ENCODE measurements at regions of chr6 and their contacts with region 1.

Region 1: GRCh38 chr6:31068669-31069340 is 43.6 kb downstream of the C6orf15 start:
- DNase-seq: peak; percentile 61 to 80
- H3K4me3 ChIP-seq: no peak overlapping the region
- H3K27ac ChIP-seq: no peak overlapping the region
- H3K4me1 ChIP-seq: peaks cover 3% of the 10 kb centered on the region; the same call in 1 of the 2 replicates
- H3K27me3 ChIP-seq: no peaks in the 10 kb centered on the region
- CTCF ChIP-seq: peak; percentile 94

Region 2: GRCh38 chr6:30483677-30484279 is 585.0 kb before region 1 on chr6:
- CTCF ChIA-PET with region 1: interaction called, 3 read pairs
- POLR2A ChIA-PET with region 1: no interaction called
- intact Hi-C with region 1: loop called (anchors 2 kb)
- DNase-seq: peak; percentile 45 to 56
- H3K4me3 ChIP-seq: no peak overlapping the region
- H3K27ac ChIP-seq: no peak overlapping the region
- H3K4me1 ChIP-seq: no peaks in the 10 kb centered on the region; the same call in 1 of the 2 replicates
- H3K27me3 ChIP-seq: peaks cover 30% of the 10 kb centered on the region
- CTCF ChIP-seq: peak; percentile 74

Region 3: GRCh38 chr6:30877419-30878371 is 191.1 kb before region 1 on chr6:
- CTCF ChIA-PET with region 1: interaction called, 4 read pairs
- POLR2A ChIA-PET with region 1: no interaction called
- intact Hi-C with region 1: loop called (anchors 1 kb)
- DNase-seq: peak; percentile 72 to 86
- H3K4me3 ChIP-seq: peak overlapping the region; percentile 49; the same call in 1 of the 2 replicates
- H3K27ac ChIP-seq: no peak overlapping the region
- H3K4me1 ChIP-seq: peaks cover 20% of the 10 kb centered on the region
- H3K27me3 ChIP-seq: no peaks in the 10 kb centered on the region
- CTCF ChIP-seq: peak; percentile 92

Region 4: DNA sequence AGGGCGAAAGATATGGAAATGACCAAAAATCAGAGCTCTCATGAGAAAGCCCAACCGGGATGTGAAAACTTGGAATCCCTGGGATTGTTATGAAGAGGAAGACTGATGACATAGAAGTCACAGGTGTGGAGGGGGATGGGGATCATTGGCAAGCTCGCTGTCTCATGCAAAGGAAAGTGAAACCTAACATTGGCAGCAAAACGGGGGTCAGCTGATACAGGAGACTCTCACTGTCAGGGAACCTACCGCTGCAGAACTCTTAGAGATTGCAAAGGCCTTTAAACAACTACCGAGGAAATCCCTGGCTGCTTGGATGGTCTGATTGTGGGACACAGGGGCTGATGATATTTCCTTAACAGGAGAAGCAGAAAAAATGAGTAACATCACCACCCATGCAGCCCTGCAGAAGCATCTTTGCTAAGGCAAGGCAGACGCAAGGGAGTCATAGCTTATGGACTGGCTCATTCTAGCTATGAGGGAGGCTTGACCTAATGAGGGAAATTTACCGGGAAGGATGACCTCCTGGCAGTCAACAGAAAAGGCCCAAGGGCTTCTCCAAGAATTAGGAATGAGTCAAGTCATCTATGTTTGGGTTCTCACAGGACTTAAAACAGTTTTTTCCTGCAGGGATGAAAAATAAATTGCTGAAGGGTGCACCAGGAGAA is 78.3 kb before region 1 on chr6:
- CTCF ChIA-PET with region 1: no interaction called
- POLR2A ChIA-PET with region 1: interaction called, 26 read pairs
- intact Hi-C with region 1: no loop called
- DNase-seq: no peak
- H3K4me3 ChIP-seq: no peak overlapping the region
- H3K27ac ChIP-seq: no peak overlapping the region
- H3K4me1 ChIP-seq: peaks cover 6% of the 10 kb centered on the region; the same call in 1 of the 2 replicates
- H3K27me3 ChIP-seq: no peaks in the 10 kb centered on the region
- CTCF ChIP-seq: no peak

Region 5: DNA sequence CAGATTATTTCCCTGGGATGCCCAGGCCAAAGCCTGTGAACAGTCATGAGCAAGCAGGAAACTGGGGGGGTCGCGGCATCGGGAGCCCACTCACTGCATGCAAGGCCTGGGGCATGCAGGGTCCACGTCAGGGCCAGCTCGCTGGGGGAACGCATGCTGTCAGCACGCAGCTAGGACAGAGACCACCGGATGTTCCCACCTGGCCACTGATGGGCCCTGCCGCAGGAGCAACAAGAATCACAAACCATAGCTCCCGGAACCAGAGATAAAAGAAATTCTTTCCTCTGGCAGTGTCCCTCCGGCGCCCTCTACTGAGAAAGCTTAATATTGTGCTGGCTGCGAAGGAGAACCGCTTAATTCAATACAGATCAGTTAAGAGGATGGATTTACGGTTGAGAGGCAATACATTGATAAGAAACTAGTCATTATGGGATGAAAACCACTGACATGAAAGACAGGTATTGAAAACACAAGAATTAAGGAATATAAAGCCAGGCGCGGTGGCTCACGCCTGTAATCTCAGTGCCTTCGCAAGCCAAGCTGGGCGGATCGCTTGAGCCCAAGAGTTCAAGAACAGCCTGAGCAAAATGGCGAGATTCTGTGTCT is 11.0 kb after region 1 on chr6:
- CTCF ChIA-PET with region 1: interaction called, 19 read pairs
- POLR2A ChIA-PET with region 1: no interaction called
- intact Hi-C with region 1: no loop called
- DNase-seq: peak; percentile 46 to 64
- H3K4me3 ChIP-seq: no peak overlapping the region
- H3K27ac ChIP-seq: no peak overlapping the region
- H3K4me1 ChIP-seq: no peaks in the 10 kb centered on the region
- H3K27me3 ChIP-seq: no peaks in the 10 kb centered on the region
- CTCF ChIP-seq: peak; percentile 90

Region 6: GRCh38 chr6:31128093-31128676 is 59.4 kb after region 1 on chr6:
- CTCF ChIA-PET with region 1: no interaction called
- POLR2A ChIA-PET with region 1: interaction called, 4 read pairs
- intact Hi-C with region 1: loop called (anchors 5 kb)
- DNase-seq: peak; percentile 45 to 66
- H3K4me3 ChIP-seq: no peak overlapping the region
- H3K27ac ChIP-seq: no peak overlapping the region
- H3K4me1 ChIP-seq: peaks cover 15% of the 10 kb centered on the region
- H3K27me3 ChIP-seq: no peaks in the 10 kb centered on the region
- CTCF ChIP-seq: peak; percentile 85